Heart left ventricle (tissue), 16 donors: ENCODE measurements at regions of chr12 and their contacts with region 1.

Region 1: GRCh38 chr12:5437182-5437583 is 5.3 kb downstream of the NTF3 start:
- DNase-seq: peak in 1 of 5 donors; percentile 35
- ATAC-seq: peak in 2 of 4 donors; percentile 46 to 58
- H3K4me3 ChIP-seq: peak overlapping the region in 1 of 12 donors; percentile 3
- H3K27ac ChIP-seq: peak overlapping the region in 8 of 12 donors; percentile 17 to 69 (median 44)
- H3K4me1 ChIP-seq: peaks cover 0 to 49% (median 14%) of the 10 kb centered on the region in 12 donors
- H3K27me3 ChIP-seq: peaks cover 3 to 31% (median 12%) of the 10 kb centered on the region in 9 donors
- CTCF ChIP-seq: no peak
- POLR2A ChIP-seq: no peak

Region 2: GRCh38 chr12:5511644-5512600 is 74.7 kb after region 1 on chr12:
- intact Hi-C with region 1: loop called in 2 of 10 experiments (anchors 2 to 5 kb)
- DNase-seq: peak in 2 of 5 donors; percentile 31 to 35
- ATAC-seq: peak; percentile 20 to 58 (median 36)
- H3K4me3 ChIP-seq: peak overlapping the region in 2 of 12 donors; percentile 8 to 22
- H3K27ac ChIP-seq: no peak overlapping the region
- H3K4me1 ChIP-seq: peaks cover 0 to 23% (median 11%) of the 10 kb centered on the region in 12 donors
- H3K27me3 ChIP-seq: peaks cover 0 to 8% (median 0%) of the 10 kb centered on the region in 9 donors
- CTCF ChIP-seq: peak; percentile 23 to 61 (median 46)
- POLR2A ChIP-seq: no peak

Region 3: GRCh38 chr12:5546616-5547015 is 109.4 kb after region 1 on chr12:
- intact Hi-C with region 1: no loop called
- DNase-seq: no peak
- ATAC-seq: no peak
- H3K4me3 ChIP-seq: no peak overlapping the region
- H3K27ac ChIP-seq: no peak overlapping the region
- H3K4me1 ChIP-seq: no peaks in the 10 kb centered on the region
- H3K27me3 ChIP-seq: no peaks in the 10 kb centered on the region
- CTCF ChIP-seq: no peak
- POLR2A ChIP-seq: no peak